Activated CD4-positive, alpha-beta T cell treated with anti-CD3 and anti-CD28 coated beads for 36 hours (primary cell): ENCODE measurements at regions of chr5 and their contacts with region 1.

Region 1: GRCh38 chr5:72955768-72956323 is at the start of gene FCHO2:
- DNase-seq: peak; percentile 98
- ATAC-seq: peak; percentile 96
- H3K4me3 Mint-ChIP-seq: peak within 1 kb of the TSS; percentile 79
- H3K27ac Mint-ChIP-seq: peak within 1 kb of the TSS; percentile 74
- H3K4me1 Mint-ChIP-seq: peaks cover 9% of the 10 kb centered on the region
- H3K27me3 Mint-ChIP-seq: peaks cover 41% of the 10 kb centered on the region
- total RNA-seq, gene FCHO2: 0.86 to 1.3 TPM

Region 2: GRCh38 chr5:72816311-72817145 is 139.3 kb before region 1 on chr5 and contains the start of gene TNPO1:
- CTCF ChIA-PET with region 1: no interaction called
- POLR2A ChIA-PET with region 1: no interaction called
- intact Hi-C with region 1: loop called (anchors 1 to 2 kb)
- DNase-seq: peak; percentile 89
- ATAC-seq: peak; percentile 79
- H3K4me3 Mint-ChIP-seq: peak within 1 kb of the TSS; percentile 88
- H3K27ac Mint-ChIP-seq: peak within 1 kb of the TSS; percentile 85
- H3K4me1 Mint-ChIP-seq: peaks cover 14% of the 10 kb centered on the region
- H3K27me3 Mint-ChIP-seq: peaks cover 14% of the 10 kb centered on the region
- total RNA-seq, gene TNPO1: 107 to 162 TPM

Region 3: GRCh38 chr5:73160239-73160671 is 204.4 kb after region 1 on chr5:
- CTCF ChIA-PET with region 1: interaction called, 3 read pairs
- POLR2A ChIA-PET with region 1: no interaction called
- intact Hi-C with region 1: loop called in 1 of 2 experiments (anchors 1 kb)
- DNase-seq: peak; percentile 89
- ATAC-seq: peak; percentile 91
- H3K4me3 Mint-ChIP-seq: no peak overlapping the region
- H3K27ac Mint-ChIP-seq: no peak overlapping the region
- H3K4me1 Mint-ChIP-seq: peaks cover 36% of the 10 kb centered on the region
- H3K27me3 Mint-ChIP-seq: peaks cover 73% of the 10 kb centered on the region

Region 4: DNA sequence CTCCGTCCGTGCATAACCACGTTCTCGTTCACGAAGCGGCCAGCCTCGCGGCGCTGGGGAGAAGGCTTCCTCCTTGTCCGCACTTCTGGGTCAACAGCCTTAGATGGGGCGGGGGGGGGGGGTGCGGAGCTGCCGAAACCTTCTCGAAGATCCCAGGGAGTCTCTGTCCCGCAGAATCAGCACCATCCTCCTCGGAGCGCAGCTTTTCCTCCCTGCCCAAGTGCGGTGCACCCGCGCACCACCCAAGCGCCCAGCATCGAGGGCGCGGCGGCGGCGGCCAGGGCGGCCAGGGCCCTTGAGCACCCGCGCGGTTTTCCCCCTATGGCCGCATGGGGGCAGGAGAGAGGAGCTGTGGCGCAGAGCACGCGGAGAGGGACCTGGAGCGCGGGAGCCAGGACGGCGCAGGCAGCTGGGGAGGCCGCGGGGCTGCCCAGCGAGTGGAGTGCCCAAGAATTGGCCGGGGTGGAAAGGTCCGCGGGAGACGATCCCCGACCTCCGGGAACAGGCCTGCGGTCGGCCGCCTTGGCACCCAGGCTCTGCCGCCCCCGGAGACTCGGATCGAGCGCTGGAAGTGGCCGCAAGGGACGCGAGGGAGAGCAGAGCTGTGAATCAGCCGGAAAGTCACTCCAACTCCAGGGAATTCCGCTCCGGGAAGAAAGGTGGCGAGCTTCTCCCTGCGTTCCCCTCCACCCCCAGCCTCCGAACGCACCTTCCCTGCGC is 260.2 kb after region 1 on chr5:
- CTCF ChIA-PET with region 1: no interaction called
- POLR2A ChIA-PET with region 1: no interaction called
- intact Hi-C with region 1: loop called in 1 of 2 experiments (anchors 2 kb)
- DNase-seq: peak; percentile 84
- ATAC-seq: peak; percentile 82
- H3K4me3 Mint-ChIP-seq: no peak overlapping the region
- H3K27ac Mint-ChIP-seq: no peak overlapping the region
- H3K4me1 Mint-ChIP-seq: peaks cover 14% of the 10 kb centered on the region
- H3K27me3 Mint-ChIP-seq: peaks cover 76% of the 10 kb centered on the region

Region 5: GRCh38 chr5:73498057-73499008 is 542.5 kb after region 1 on chr5 and contains the start of gene BTF3:
- CTCF ChIA-PET with region 1: no interaction called
- POLR2A ChIA-PET with region 1: no interaction called
- intact Hi-C with region 1: loop called in 1 of 2 experiments (anchors 5 kb)
- DNase-seq: peak; percentile 96
- ATAC-seq: peak; percentile 95
- H3K4me3 Mint-ChIP-seq: peak within 1 kb of the TSS; percentile 87
- H3K27ac Mint-ChIP-seq: peak within 1 kb of the TSS; percentile 98
- H3K4me1 Mint-ChIP-seq: peaks cover 35% of the 10 kb centered on the region
- H3K27me3 Mint-ChIP-seq: peaks cover 2% of the 10 kb centered on the region
- total RNA-seq, gene BTF3: 1,030 to 1,213 TPM